Lower leg skin (tissue), 4 donors: ENCODE measurements at regions of chr11 and their contacts with region 1.

Region 1: GRCh38 chr11:8699903-8700302 is 17.3 kb downstream of the RPL27A start:
- DNase-seq: no peak
- H3K4me3 ChIP-seq: no peak overlapping the region
- CTCF ChIP-seq: no peak
- POLR2A ChIP-seq: no peak

Region 2: GRCh38 chr11:8658321-8659057 is 41.4 kb before region 1 on chr11:
- intact Hi-C with region 1: no loop called
- DNase-seq: no peak
- H3K4me3 ChIP-seq: no peak overlapping the region
- CTCF ChIP-seq: no peak
- POLR2A ChIP-seq: no peak

Region 3: GRCh38 chr11:8740129-8740528 is 40.2 kb after region 1 on chr11:
- intact Hi-C with region 1: no loop called
- DNase-seq: no peak
- H3K4me3 ChIP-seq: no peak overlapping the region
- CTCF ChIP-seq: no peak
- POLR2A ChIP-seq: no peak

Region 4: GRCh38 chr11:8754241-8754640 is 54.3 kb after region 1 on chr11:
- intact Hi-C with region 1: no loop called
- DNase-seq: no peak
- H3K4me3 ChIP-seq: no peak overlapping the region
- CTCF ChIP-seq: no peak
- POLR2A ChIP-seq: no peak

Region 5: DNA sequence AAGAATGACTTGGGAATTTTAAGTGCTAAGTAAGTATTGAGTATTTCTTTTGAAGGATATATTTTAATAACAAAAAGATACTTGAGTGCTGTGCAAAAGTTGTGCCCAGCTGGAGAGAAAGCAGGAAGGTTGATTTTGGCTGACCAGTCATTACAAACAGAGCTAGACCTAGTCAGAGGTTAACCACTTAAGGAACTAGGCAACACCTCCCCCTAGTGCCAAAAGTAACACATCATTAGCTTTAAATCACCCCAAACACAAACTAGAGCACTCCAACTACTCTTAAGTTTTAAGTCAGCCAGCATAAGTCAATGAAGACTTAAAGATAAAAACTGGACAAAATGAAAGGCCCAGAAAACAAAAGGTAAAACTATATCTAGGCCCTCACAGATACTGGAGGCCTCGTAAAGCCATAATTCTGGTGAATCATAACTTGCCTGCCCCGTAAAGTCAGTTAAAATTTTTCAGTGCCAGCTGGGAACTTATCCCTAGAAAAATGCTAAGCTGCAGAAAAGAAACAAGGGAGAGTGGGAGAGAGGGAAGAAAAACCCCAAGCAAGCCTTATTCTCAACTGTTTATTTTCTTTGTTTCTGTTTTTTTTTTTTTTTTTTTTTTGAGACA is 259.8 kb after region 1 on chr11:
- intact Hi-C with region 1: loop called (anchors 10 kb)
- DNase-seq: no peak
- H3K4me3 ChIP-seq: no peak overlapping the region
- CTCF ChIP-seq: no peak
- POLR2A ChIP-seq: no peak